Lower leg skin (tissue), 4 donors: ENCODE measurements at regions of chr11 and their contacts with region 1.

Region 1: GRCh38 chr11:47932544-47932943 is 47.8 kb upstream of the PTPRJ start:
- DNase-seq: no peak
- H3K4me3 ChIP-seq: no peak overlapping the region
- CTCF ChIP-seq: no peak
- POLR2A ChIP-seq: no peak

Region 2: DNA sequence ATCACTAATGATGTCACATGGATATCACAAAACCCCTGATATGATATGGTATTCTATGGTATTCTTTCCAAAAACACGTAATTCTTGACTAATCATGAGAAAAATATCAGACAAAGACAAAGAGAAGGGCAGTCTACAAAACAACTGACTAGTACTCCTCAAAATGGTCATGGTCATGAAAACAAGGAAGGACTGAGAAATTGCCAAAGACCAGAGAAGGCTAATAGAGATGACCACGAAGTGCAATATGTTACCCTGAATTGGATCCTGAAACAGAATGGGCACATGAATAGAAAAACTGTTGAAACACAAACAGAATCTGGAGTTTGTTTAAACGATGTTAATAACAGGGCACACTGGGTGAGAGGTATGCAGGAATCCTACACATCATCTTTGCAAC is 1096.6 kb before region 1 on chr11:
- intact Hi-C with region 1: no loop called
- DNase-seq: no peak
- H3K4me3 ChIP-seq: no peak overlapping the region
- CTCF ChIP-seq: no peak
- POLR2A ChIP-seq: no peak

Region 3: GRCh38 chr11:48111891-48112290 is 179.3 kb after region 1 on chr11:
- intact Hi-C with region 1: loop called (anchors 5 kb)
- DNase-seq: peak in 1 of 2 donors; percentile 70
- H3K4me3 ChIP-seq: no peak overlapping the region
- CTCF ChIP-seq: no peak
- POLR2A ChIP-seq: no peak